T-cell (primary cell): ENCODE measurements at regions of chr12 and their contacts with region 1.

Region 1: GRCh38 chr12:92136965-92137721 is 8.5 kb downstream of the BTG1 start:
- DNase-seq: no peak
- ATAC-seq: peak in 3 of 4 experiments; percentile 2 to 28 (median 22)
- H3K4me3 ChIP-seq: peak overlapping the region; percentile 77 to 98
- H3K4me3 Mint-ChIP-seq: peak overlapping the region; percentile 100
- H3K27ac ChIP-seq: peak overlapping the region; percentile 91
- H3K27ac Mint-ChIP-seq: peak overlapping the region; percentile 99 to 100
- H3K4me1 ChIP-seq: peaks cover 35 to 69% of the 10 kb centered on the region in 2 experiments
- H3K4me1 Mint-ChIP-seq: peaks cover 53 to 66% (median 61%) of the 10 kb centered on the region in 3 donors
- H3K27me3 ChIP-seq: no peaks in the 10 kb centered on the region
- H3K27me3 Mint-ChIP-seq: no peaks in the 10 kb centered on the region

Region 2: GRCh38 chr12:91382081-91382543 is 755.0 kb before region 1 on chr12:
- CTCF ChIA-PET with region 1: interaction called, 4 to 12 read pairs
- POLR2A ChIA-PET with region 1: interaction called, 3 to 4 read pairs
- DNase-seq: peak; percentile 61 to 92 (median 80)
- ATAC-seq: peak; percentile 84 to 89 (median 87)
- H3K4me3 ChIP-seq: peak overlapping the region in 1 of 2 donors; percentile 67
- H3K4me3 Mint-ChIP-seq: peak overlapping the region; percentile 62 to 76 (median 74)
- H3K27ac ChIP-seq: no peak overlapping the region
- H3K27ac Mint-ChIP-seq: peak overlapping the region; percentile 40 to 64
- H3K4me1 ChIP-seq: peaks cover 8% of the 10 kb centered on the region in 2 experiments
- H3K4me1 Mint-ChIP-seq: peaks cover 6 to 16% (median 7%) of the 10 kb centered on the region in 3 donors
- H3K27me3 ChIP-seq: peaks cover 0 to 4% of the 10 kb centered on the region in 2 experiments
- H3K27me3 Mint-ChIP-seq: peaks cover 7 to 9% of the 10 kb centered on the region in 2 donors

Region 3: DNA sequence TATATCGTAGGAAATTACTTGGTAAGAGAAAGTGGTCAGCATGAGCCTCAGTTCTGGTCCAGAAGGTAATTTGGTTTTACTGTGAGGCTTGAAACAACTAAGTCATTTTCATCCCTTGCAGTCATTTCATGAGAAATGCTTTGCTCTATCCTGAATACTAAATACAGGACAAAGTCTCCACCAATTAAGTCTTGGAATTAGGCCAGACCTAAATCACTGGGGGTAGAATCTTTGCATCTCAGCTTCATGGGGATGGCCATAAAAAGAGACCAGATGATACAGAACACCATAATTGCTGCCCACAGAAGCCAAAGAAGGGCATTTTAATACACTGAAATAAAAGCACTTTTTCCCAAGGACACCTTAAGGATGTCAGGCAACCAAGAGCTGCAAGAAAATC is 676.7 kb before region 1 on chr12:
- CTCF ChIA-PET with region 1: interaction called in 1 of 2 experiments, 10 read pairs
- POLR2A ChIA-PET with region 1: no interaction called
- DNase-seq: no peak
- ATAC-seq: no peak
- H3K4me3 ChIP-seq: no peak overlapping the region
- H3K4me3 Mint-ChIP-seq: no peak overlapping the region
- H3K27ac ChIP-seq: no peak overlapping the region
- H3K27ac Mint-ChIP-seq: no peak overlapping the region
- H3K4me1 ChIP-seq: no peaks in the 10 kb centered on the region
- H3K4me1 Mint-ChIP-seq: no peaks in the 10 kb centered on the region
- H3K27me3 ChIP-seq: peaks cover 0 to 2% of the 10 kb centered on the region in 2 experiments
- H3K27me3 Mint-ChIP-seq: peaks cover 9 to 15% of the 10 kb centered on the region in 2 donors

Region 4: DNA sequence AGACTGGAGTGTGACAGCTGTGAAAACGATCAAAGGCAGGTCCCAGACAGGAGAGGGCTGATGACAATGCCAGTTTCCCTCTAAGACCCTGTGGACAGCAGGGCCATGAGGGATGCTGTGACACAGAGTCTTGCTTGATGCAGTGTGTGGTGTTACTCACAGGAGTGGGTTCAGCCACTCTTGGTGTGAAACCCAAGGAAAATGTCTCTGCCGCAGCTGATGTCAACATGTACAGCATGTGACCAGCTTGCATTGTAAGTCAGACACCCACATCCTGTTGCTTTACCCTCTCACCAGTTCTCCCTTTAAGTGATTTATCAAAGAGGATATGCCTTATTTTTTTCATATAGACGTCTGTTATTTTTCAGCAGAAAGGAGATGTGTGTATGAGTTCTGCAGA is 260.1 kb before region 1 on chr12:
- CTCF ChIA-PET with region 1: interaction called in 1 of 2 experiments, 10 read pairs
- POLR2A ChIA-PET with region 1: interaction called, 7 to 37 read pairs
- DNase-seq: peak; percentile 60 to 97 (median 86)
- ATAC-seq: peak; percentile 91 to 98 (median 96)
- H3K4me3 ChIP-seq: peak overlapping the region in 1 of 2 donors; percentile 30
- H3K4me3 Mint-ChIP-seq: peak overlapping the region; percentile 69 to 84 (median 77)
- H3K27ac ChIP-seq: peak overlapping the region; percentile 97
- H3K27ac Mint-ChIP-seq: peak overlapping the region; percentile 97 to 100
- H3K4me1 ChIP-seq: peaks cover 42 to 47% of the 10 kb centered on the region in 2 experiments
- H3K4me1 Mint-ChIP-seq: peaks cover 71 to 84% (median 82%) of the 10 kb centered on the region in 3 donors
- H3K27me3 ChIP-seq: no peaks in the 10 kb centered on the region
- H3K27me3 Mint-ChIP-seq: no peaks in the 10 kb centered on the region

Region 5: DNA sequence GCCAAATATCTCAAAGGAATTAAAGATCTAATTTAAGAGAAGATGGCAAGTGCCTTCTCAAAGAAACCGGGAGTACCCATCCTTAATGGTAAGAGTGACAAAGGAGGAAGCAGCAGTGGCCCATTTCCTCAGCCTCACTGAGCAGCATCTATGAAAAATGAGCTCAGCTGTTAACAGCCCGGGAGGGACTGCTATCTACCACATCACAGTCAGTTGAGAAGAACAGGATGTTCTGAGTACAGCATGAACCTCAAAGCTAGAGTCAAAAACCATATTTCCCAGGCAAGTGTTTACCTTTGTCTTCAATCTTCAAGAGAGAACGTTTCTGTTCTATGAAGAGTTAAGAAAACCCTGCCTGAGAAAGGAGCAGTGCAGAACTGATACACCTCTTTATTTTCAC is 106.5 kb before region 1 on chr12:
- CTCF ChIA-PET with region 1: interaction called, 3 to 5 read pairs
- POLR2A ChIA-PET with region 1: interaction called, 3 to 19 read pairs
- DNase-seq: peak in 34 of 35 experiments; percentile 46 to 88 (median 67)
- ATAC-seq: peak; percentile 92
- H3K4me3 ChIP-seq: peak overlapping the region in 1 of 2 donors; percentile 11
- H3K4me3 Mint-ChIP-seq: peak overlapping the region; percentile 58 to 71 (median 66)
- H3K27ac ChIP-seq: peak overlapping the region; percentile 94
- H3K27ac Mint-ChIP-seq: peak overlapping the region; percentile 97 to 98
- H3K4me1 ChIP-seq: peaks cover 60 to 62% of the 10 kb centered on the region in 2 experiments
- H3K4me1 Mint-ChIP-seq: peaks cover 87 to 91% (median 89%) of the 10 kb centered on the region in 3 donors
- H3K27me3 ChIP-seq: no peaks in the 10 kb centered on the region
- H3K27me3 Mint-ChIP-seq: no peaks in the 10 kb centered on the region

Region 6: DNA sequence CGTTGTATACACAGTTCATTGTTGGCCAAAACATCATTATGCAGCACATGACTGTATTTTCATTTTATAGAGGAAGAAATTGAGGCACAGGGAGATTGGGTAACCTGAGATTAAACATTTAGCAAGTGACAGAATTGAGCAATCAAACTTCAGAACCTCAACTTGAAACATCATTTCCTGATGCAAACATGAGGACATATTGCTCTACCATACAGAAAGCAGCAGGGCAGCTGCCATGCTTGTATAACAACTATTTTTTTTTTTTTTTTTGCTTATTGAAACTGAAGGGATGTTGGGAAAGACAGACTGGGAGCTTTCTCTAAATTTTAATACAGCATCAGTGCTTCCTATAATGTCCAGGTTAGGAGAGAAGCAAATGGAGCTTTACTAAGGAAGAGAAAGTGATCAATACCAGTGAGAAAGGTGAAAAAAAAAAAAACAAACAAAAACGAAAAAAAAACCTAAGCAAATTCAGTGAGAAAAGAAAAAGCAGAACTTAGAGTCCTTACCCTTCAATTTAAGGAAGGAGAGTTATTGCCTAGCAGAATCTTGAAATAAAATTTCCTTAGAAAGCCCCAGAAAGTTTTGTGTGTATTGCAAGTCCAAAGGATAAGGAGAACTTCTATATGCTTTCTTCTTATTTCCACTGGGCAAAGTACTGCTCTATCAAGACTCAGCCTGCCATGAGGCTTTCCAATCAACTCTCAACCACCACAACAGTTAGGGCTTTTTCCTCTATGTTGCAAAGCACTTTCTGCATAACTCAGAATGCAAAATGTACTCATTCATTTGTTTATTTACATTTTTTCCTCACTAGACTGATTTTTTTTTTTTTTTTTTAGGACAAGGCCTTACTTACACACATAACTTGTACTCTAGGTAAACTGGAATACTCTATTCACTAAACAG is 13.1 kb before region 1 on chr12:
- CTCF ChIA-PET with region 1: interaction called in 1 of 2 experiments, 3 read pairs
- POLR2A ChIA-PET with region 1: interaction called, 4 to 170 read pairs
- DNase-seq: no peak
- ATAC-seq: peak in 1 of 4 experiments; percentile 3
- H3K4me3 ChIP-seq: no peak overlapping the region
- H3K4me3 Mint-ChIP-seq: peak overlapping the region in 2 of 3 donors; percentile 40 to 100
- H3K27ac ChIP-seq: no peak overlapping the region
- H3K27ac Mint-ChIP-seq: peak overlapping the region; percentile 69 to 72
- H3K4me1 ChIP-seq: peaks cover 4 to 10% of the 10 kb centered on the region in 2 experiments
- H3K4me1 Mint-ChIP-seq: peaks cover 59 to 66% (median 62%) of the 10 kb centered on the region in 3 donors
- H3K27me3 ChIP-seq: no peaks in the 10 kb centered on the region
- H3K27me3 Mint-ChIP-seq: no peaks in the 10 kb centered on the region

Region 7: GRCh38 chr12:92608151-92609091 is 471.3 kb after region 1 on chr12:
- CTCF ChIA-PET with region 1: interaction called in 1 of 2 experiments, 11 read pairs
- POLR2A ChIA-PET with region 1: no interaction called
- DNase-seq: peak in 1 of 35 experiments; percentile 61
- ATAC-seq: peak in 2 of 4 experiments; percentile 30 to 46
- H3K4me3 ChIP-seq: no peak overlapping the region
- H3K4me3 Mint-ChIP-seq: peak overlapping the region in 1 of 3 donors; percentile 72
- H3K27ac ChIP-seq: no peak overlapping the region
- H3K27ac Mint-ChIP-seq: peak overlapping the region in 1 of 2 donors; percentile 57
- H3K4me1 ChIP-seq: no peaks in the 10 kb centered on the region
- H3K4me1 Mint-ChIP-seq: peaks cover 10 to 21% (median 20%) of the 10 kb centered on the region in 3 donors
- H3K27me3 ChIP-seq: no peaks in the 10 kb centered on the region
- H3K27me3 Mint-ChIP-seq: no peaks in the 10 kb centered on the region